ENCODE measurements at regions of chr1 and their contacts with region 1.

Region 1: DNA sequence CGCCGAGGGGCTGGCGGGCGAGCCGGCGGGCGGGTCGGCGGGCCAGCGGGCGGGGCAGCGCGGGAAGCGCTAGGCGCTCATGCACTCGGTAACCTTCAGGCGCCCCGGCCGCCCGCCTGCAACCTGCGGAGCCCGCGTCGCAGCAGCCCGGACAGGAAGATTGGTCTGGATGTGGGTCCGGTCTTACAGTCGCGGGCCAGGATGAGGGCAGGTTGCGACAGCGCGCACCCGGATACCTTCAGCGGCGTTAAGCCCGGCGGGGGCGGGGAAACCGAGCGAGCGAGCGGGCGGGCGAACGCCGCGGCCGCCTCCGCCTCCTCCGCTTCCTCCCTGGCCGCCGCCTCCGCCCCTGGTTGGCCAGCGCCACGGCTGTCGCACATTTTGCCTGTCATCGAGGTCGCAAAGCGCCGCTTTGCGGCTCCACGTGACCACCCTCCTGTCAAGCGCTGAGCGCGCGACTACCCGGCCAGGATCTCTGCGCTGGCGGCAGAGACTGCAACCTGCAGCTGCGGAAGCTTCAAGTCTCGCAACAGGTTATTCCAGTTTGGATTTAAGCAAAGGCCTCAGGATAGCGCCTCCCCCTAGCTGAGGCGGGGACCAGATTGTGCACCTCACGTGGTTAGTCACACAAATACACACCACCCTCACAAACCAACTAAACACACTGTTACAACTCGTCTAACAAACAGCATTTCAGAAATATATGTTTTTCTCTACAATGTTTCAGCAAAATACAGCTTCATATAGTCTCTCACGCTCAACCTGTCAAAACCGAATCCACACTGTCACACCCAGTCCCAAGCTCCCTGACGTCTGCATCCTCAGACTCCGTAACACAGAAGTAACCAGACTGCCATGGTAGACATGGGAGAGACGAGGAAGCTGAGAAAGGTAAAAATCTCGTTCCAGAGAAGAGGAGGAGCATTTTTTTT is at the start of gene FAF1:
- DNase-seq: peak; percentile 98
- H3K4me3 Mint-ChIP-seq: peak within 1 kb of the TSS; percentile 87
- H3K27ac Mint-ChIP-seq: peak within 1 kb of the TSS; percentile 77
- H3K4me1 Mint-ChIP-seq: peaks cover 19% of the 10 kb centered on the region
- H3K27me3 Mint-ChIP-seq: no peaks in the 10 kb centered on the region
- total RNA-seq, gene FAF1: 59.7 and 65.3 TPM in 2 replicates

Region 2: GRCh38 chr1:50929376-50929958 is 30.7 kb before region 1 on chr1:
- intact Hi-C with region 1: loop called (anchors 2 kb)
- DNase-seq: no peak
- H3K4me3 Mint-ChIP-seq: no peak overlapping the region
- H3K27ac Mint-ChIP-seq: no peak overlapping the region
- H3K4me1 Mint-ChIP-seq: peaks cover 17% of the 10 kb centered on the region
- H3K27me3 Mint-ChIP-seq: no peaks in the 10 kb centered on the region

Region 3: GRCh38 chr1:50977575-50978143 is 17.5 kb after region 1 on chr1:
- intact Hi-C with region 1: loop called (anchors 1 kb)
- DNase-seq: no peak
- H3K4me3 Mint-ChIP-seq: peak overlapping the region; percentile 77
- H3K27ac Mint-ChIP-seq: no peak overlapping the region
- H3K4me1 Mint-ChIP-seq: peaks cover 25% of the 10 kb centered on the region
- H3K27me3 Mint-ChIP-seq: peaks cover 57% of the 10 kb centered on the region

Region 4: GRCh38 chr1:51147394-51147793 is 187.2 kb after region 1 on chr1:
- intact Hi-C with region 1: no loop called
- DNase-seq: no peak
- H3K4me3 Mint-ChIP-seq: no peak overlapping the region
- H3K27ac Mint-ChIP-seq: no peak overlapping the region
- H3K4me1 Mint-ChIP-seq: no peaks in the 10 kb centered on the region
- H3K27me3 Mint-ChIP-seq: peaks cover 22% of the 10 kb centered on the region

Region 5: GRCh38 chr1:51341876-51342496 is 381.8 kb after region 1 on chr1:
- intact Hi-C with region 1: no loop called
- DNase-seq: no peak
- H3K4me3 Mint-ChIP-seq: no peak overlapping the region
- H3K27ac Mint-ChIP-seq: no peak overlapping the region
- H3K4me1 Mint-ChIP-seq: peaks cover 3% of the 10 kb centered on the region
- H3K27me3 Mint-ChIP-seq: peaks cover 36% of the 10 kb centered on the region